H1 (cell line): ENCODE measurements at regions of chr18 and their contacts with region 1.

Region 1: GRCh38 chr18:55234366-55235093 is 275.3 kb upstream of the CCDC68 start:
- DNase-seq: peak; percentile 63 to 87
- H3K4me3 ChIP-seq: no peak overlapping the region
- H3K27ac ChIP-seq: no peak overlapping the region
- H3K4me1 ChIP-seq: no peaks in the 10 kb centered on the region
- H3K27me3 ChIP-seq: peaks cover 0 to 1% (median 0%) of the 10 kb centered on the region in 4 experiments; a peak in 1 of 7 replicates
- CTCF ChIP-seq: peak; percentile 73 to 91 (median 78)
- EP300 ChIP-seq: no peak
- POLR2A ChIP-seq: no peak
- RAD21 ChIP-seq: peak; percentile 96 to 97

Region 2: GRCh38 chr18:55152801-55153200 is 81.7 kb before region 1 on chr18:
- CTCF ChIA-PET with region 1: no interaction called
- POLR2A ChIA-PET with region 1: no interaction called
- DNase-seq: no peak
- H3K4me3 ChIP-seq: no peak overlapping the region
- H3K27ac ChIP-seq: no peak overlapping the region
- H3K4me1 ChIP-seq: no peaks in the 10 kb centered on the region
- H3K27me3 ChIP-seq: no peaks in the 10 kb centered on the region
- CTCF ChIP-seq: no peak
- EP300 ChIP-seq: no peak
- POLR2A ChIP-seq: no peak
- RAD21 ChIP-seq: no peak

Region 3: DNA sequence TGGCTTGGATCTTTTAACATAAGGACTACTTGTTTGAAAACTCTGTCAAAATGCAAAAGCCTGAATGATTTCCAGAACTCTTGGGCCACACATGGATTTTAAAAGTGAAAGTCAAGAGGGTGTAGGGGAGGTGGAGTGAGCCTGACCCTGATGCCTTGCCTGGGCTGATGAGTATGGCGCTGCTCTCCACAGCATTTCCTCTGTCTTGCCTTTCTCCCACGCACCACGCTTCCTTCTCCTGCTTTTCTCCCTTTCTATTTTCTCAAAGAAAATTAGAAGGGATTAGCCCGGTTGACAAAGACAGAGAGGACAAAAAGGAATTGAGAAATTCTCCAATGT is 68.3 kb before region 1 on chr18:
- CTCF ChIA-PET with region 1: no interaction called
- POLR2A ChIA-PET with region 1: no interaction called
- DNase-seq: no peak
- H3K4me3 ChIP-seq: no peak overlapping the region
- H3K27ac ChIP-seq: no peak overlapping the region
- H3K4me1 ChIP-seq: no peaks in the 10 kb centered on the region
- H3K27me3 ChIP-seq: no peaks in the 10 kb centered on the region
- CTCF ChIP-seq: no peak
- EP300 ChIP-seq: no peak
- POLR2A ChIP-seq: no peak
- RAD21 ChIP-seq: no peak

Region 4: GRCh38 chr18:55224086-55224625 is 10.4 kb before region 1 on chr18:
- CTCF ChIA-PET with region 1: interaction called, 21 read pairs
- POLR2A ChIA-PET with region 1: no interaction called
- DNase-seq: no peak
- H3K4me3 ChIP-seq: no peak overlapping the region
- H3K27ac ChIP-seq: no peak overlapping the region
- H3K4me1 ChIP-seq: peaks cover 0 to 3% (median 1%) of the 10 kb centered on the region in 4 experiments; a peak in 1 of 7 replicates
- H3K27me3 ChIP-seq: no peaks in the 10 kb centered on the region
- CTCF ChIP-seq: no peak
- EP300 ChIP-seq: no peak
- POLR2A ChIP-seq: no peak
- RAD21 ChIP-seq: no peak

Region 5: GRCh38 chr18:55258088-55258487 is 23.6 kb after region 1 on chr18:
- CTCF ChIA-PET with region 1: interaction called, 22 read pairs
- POLR2A ChIA-PET with region 1: no interaction called
- DNase-seq: no peak
- H3K4me3 ChIP-seq: no peak overlapping the region
- H3K27ac ChIP-seq: no peak overlapping the region
- H3K4me1 ChIP-seq: no peaks in the 10 kb centered on the region
- H3K27me3 ChIP-seq: no peaks in the 10 kb centered on the region
- CTCF ChIP-seq: no peak
- EP300 ChIP-seq: no peak
- POLR2A ChIP-seq: no peak
- RAD21 ChIP-seq: no peak

Region 6: DNA sequence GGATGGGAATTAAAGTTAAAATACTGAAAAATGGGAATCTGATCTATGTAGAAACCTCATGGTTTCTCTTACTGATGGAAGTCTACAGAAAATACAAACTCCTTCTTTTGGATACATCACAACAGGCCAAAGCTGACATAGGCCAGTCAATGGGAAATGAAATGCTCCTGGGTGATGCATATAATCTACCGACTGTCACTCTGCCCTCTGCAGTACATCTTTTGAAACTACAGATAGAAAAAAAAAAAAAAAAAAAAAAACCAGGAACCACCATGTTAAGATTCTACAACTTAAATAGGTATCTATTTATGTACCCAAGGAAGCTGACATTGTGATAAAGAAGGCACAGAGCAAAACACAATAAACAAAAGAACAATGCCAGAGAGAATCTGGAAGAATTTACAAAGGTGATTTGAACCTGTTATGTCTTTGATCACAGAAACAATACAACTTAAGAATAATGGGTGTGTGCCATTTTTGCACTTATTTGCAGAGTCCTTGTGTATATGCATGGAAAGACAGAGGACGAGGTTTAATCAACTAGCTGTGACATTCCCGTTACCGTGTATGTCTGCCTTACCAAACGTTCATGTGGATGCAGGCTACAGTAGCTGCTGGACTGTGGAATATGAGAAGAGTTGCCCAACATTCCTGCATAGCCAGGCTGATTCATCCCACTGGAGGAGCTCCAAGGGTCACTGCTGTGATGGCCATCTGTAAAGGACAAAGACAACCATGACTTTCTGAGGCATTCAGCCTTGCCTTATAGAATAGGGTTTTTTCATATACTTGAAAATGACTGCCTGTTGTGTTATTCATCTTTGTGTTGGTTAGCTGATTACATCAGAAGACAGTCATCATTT is 40.7 kb after region 1 on chr18:
- CTCF ChIA-PET with region 1: interaction called, 30 read pairs
- POLR2A ChIA-PET with region 1: no interaction called
- DNase-seq: no peak
- H3K4me3 ChIP-seq: no peak overlapping the region
- H3K27ac ChIP-seq: no peak overlapping the region
- H3K4me1 ChIP-seq: no peaks in the 10 kb centered on the region
- H3K27me3 ChIP-seq: no peaks in the 10 kb centered on the region
- CTCF ChIP-seq: peak in 1 of 3 experiments; percentile 38; a peak in 1 of 4 replicates
- EP300 ChIP-seq: no peak
- POLR2A ChIP-seq: no peak
- RAD21 ChIP-seq: peak; percentile 18 to 28; a peak in 2 of 4 replicates

Region 7: DNA sequence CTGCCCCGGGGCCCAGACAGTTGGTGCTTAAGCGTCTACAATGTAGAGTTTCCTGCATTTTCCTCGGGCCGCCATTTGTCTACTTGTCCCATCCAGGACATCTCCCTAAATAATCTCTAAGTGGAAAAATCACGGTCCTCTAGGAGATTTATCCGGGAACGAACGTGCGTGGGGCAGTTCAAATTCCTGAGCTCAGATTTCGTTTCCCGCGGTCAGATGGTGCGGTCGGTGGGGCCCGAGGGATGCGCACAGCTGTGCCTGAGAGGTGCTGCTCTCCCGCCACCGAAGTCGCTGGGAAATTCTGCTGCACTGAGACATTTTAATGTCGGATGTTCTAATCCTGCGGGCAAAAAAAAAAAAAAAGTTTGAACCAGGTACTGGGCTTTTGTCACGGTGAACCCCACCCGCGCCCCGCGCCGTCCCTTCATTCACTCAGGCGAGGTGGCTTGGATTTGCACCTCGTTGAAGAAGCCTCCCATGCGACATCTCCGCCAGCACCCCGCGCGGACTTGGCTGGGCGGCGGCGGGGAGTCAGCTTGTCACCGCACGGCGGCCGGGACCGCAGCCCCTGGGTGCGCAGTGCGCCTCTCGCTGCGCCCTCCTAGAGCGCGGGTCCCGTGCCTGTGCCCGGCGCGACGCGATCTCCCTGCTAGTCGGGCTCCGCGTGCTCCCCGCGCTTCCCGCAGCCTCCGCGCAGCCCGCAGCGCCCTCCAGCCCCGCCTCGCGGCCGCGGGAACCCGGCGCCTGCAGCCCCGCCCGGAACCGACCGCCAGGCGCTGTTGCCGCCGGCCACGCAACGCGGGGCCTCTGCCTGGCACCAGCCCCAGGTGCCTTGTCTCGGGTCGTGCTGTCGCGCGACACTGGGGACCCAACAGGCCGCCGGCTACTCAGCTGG is 545.4 kb after region 1 on chr18:
- CTCF ChIA-PET with region 1: interaction called, 11 read pairs
- POLR2A ChIA-PET with region 1: no interaction called
- DNase-seq: peak in 1 of 2 experiments; percentile 63
- H3K4me3 ChIP-seq: peak overlapping the region; percentile 35 to 76 (median 61)
- H3K27ac ChIP-seq: no peak overlapping the region
- H3K4me1 ChIP-seq: peaks cover 0 to 15% (median 7%) of the 10 kb centered on the region in 4 experiments; a peak in 6 of 7 replicates
- H3K27me3 ChIP-seq: peaks cover 0 to 7% (median 2%) of the 10 kb centered on the region in 4 experiments; a peak in 3 of 7 replicates
- CTCF ChIP-seq: peak; percentile 23 to 51 (median 32)
- EP300 ChIP-seq: no peak
- POLR2A ChIP-seq: no peak
- RAD21 ChIP-seq: peak in 1 of 2 experiments; percentile 55; a peak in 3 of 4 replicates